CD4-positive, alpha-beta T cell (primary cell): ENCODE measurements at regions of chr20 and their contacts with region 1.

Region 1: DNA sequence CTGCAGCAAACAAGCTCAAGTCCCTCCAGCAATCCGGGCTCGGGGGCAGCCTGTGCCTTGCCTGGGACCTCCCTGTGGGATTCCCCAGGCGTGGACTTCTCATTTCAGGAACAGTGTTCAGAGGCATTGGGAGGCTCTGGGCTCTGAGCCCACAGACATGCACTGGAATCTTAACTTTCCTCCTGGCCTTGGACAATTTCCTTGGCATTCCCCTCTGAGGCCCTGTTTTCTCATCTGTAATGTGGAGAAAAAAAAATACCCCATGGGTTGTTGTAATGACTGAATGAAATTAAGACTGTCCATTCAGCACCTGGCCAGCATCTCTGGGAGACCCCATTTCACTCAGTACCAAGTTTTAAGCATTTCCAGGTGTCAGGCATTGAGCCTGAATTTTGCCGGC is 17.6 kb downstream of the BPIFB4 start:
- DNase-seq: no peak
- ATAC-seq: no peak
- H3K4me3 ChIP-seq: no peak overlapping the region
- H3K4me3 Mint-ChIP-seq: no peak overlapping the region
- H3K27ac ChIP-seq: no peak overlapping the region
- H3K27ac Mint-ChIP-seq: no peak overlapping the region
- H3K4me1 ChIP-seq: peaks cover 6% of the 10 kb centered on the region
- H3K4me1 Mint-ChIP-seq: peaks cover 11% of the 10 kb centered on the region
- H3K27me3 ChIP-seq: no peaks in the 10 kb centered on the region
- H3K27me3 Mint-ChIP-seq: no peaks in the 10 kb centered on the region
- CTCF ChIP-seq: no peak

Region 2: GRCh38 chr20:33299111-33299603 is 202.2 kb after region 1 on chr20:
- CTCF ChIA-PET with region 1: no interaction called
- POLR2A ChIA-PET with region 1: no interaction called
- intact Hi-C with region 1: loop called in 1 of 2 experiments (anchors 10 kb)
- DNase-seq: peak; percentile 49 to 84 (median 70)
- ATAC-seq: peak; percentile 79
- H3K4me3 ChIP-seq: no peak overlapping the region
- H3K4me3 Mint-ChIP-seq: no peak overlapping the region
- H3K27ac ChIP-seq: no peak overlapping the region
- H3K27ac Mint-ChIP-seq: no peak overlapping the region
- H3K4me1 ChIP-seq: peaks cover 6% of the 10 kb centered on the region
- H3K4me1 Mint-ChIP-seq: no peaks in the 10 kb centered on the region
- H3K27me3 ChIP-seq: no peaks in the 10 kb centered on the region
- H3K27me3 Mint-ChIP-seq: no peaks in the 10 kb centered on the region
- CTCF ChIP-seq: peak; percentile 87